ENCODE measurements at regions of chr12 and their contacts with region 1.

Region 1: GRCh38 chr12:38906482-38907170 is 1.2 kb upstream of the CPNE8 start:
- DNase-seq: peak; percentile 88
- H3K4me3 Mint-ChIP-seq: peak overlapping the region; percentile 98
- H3K27ac Mint-ChIP-seq: peak overlapping the region; percentile 89
- H3K4me1 Mint-ChIP-seq: peaks cover 22% of the 10 kb centered on the region
- H3K27me3 Mint-ChIP-seq: no peaks in the 10 kb centered on the region
- CTCF ChIP-seq: peak; percentile 81

Region 2: GRCh38 chr12:38053655-38054464 is 852.8 kb before region 1 on chr12:
- CTCF ChIA-PET with region 1: interaction called, 3 read pairs
- POLR2A ChIA-PET with region 1: no interaction called
- intact Hi-C with region 1: loop called (anchors 2 kb)
- DNase-seq: peak; percentile 68
- H3K4me3 Mint-ChIP-seq: no peak overlapping the region
- H3K27ac Mint-ChIP-seq: no peak overlapping the region
- H3K4me1 Mint-ChIP-seq: peaks cover 8% of the 10 kb centered on the region
- H3K27me3 Mint-ChIP-seq: no peaks in the 10 kb centered on the region
- CTCF ChIP-seq: peak; percentile 47

Region 3: GRCh38 chr12:38384816-38385378 is 521.7 kb before region 1 on chr12:
- CTCF ChIA-PET with region 1: interaction called, 15 read pairs
- POLR2A ChIA-PET with region 1: interaction called, 18 read pairs
- intact Hi-C with region 1: loop called (anchors 5 kb)
- DNase-seq: peak; percentile 98
- H3K4me3 Mint-ChIP-seq: peak overlapping the region; percentile 52
- H3K27ac Mint-ChIP-seq: peak overlapping the region; percentile 47
- H3K4me1 Mint-ChIP-seq: peaks cover 43% of the 10 kb centered on the region
- H3K27me3 Mint-ChIP-seq: no peaks in the 10 kb centered on the region
- CTCF ChIP-seq: peak; percentile 33

Region 4: DNA sequence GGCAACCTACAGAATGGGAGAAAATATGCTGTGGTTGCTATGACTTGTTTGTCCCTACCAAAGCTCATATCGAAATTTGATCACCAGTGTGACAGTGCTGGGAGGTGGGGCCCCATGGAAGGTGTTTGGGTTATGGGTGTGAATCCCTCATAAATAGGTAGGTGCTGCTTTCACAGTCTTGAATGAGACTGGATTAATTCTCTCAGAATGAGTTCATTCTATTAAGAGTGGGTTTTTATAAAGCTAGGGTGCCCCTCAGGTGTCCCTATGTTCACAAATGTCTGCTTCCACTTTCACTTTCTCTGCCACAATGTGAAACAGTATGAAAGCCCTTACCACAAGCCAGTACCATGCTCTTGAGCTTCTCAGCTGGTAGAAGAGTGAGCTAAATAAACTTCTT is 134.8 kb before region 1 on chr12:
- CTCF ChIA-PET with region 1: interaction called, 8 read pairs
- POLR2A ChIA-PET with region 1: interaction called, 3 read pairs
- intact Hi-C with region 1: loop called (anchors 10 kb)
- DNase-seq: peak; percentile 5
- H3K4me3 Mint-ChIP-seq: peak overlapping the region; percentile 16
- H3K27ac Mint-ChIP-seq: no peak overlapping the region
- H3K4me1 Mint-ChIP-seq: peaks cover 6% of the 10 kb centered on the region
- H3K27me3 Mint-ChIP-seq: no peaks in the 10 kb centered on the region
- CTCF ChIP-seq: no peak

Region 5: DNA sequence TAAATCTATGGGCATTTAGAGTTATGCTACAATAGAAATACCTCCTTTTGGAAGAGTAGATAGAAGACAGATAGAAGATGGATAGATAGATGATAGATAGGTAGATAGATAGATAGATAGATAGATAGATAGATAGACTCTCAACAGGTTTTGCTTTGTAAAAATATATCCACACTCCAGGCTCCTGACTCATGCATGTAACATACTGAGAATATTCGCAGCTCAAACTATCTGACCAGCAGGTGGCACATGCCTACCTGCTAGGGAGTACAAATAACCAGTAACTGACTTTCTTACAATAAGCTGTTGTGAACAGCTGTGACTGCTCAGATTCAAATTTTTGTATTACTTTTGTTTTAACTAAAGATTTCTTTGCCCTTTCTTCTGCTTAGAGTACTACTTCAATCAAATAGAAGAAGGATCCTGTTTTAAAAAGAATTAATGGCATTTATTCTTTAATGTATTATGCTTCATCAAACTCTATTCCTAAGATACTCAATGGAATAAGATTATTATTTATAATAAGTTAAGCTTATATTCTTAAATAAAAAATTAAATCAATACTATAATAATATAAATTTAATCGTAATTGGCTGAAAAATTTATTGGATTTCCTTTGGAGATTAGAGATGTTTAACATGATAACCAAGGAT is 14.5 kb after region 1 on chr12:
- CTCF ChIA-PET with region 1: interaction called, 86 read pairs
- POLR2A ChIA-PET with region 1: interaction called, 25 read pairs
- intact Hi-C with region 1: no loop called
- DNase-seq: peak; percentile 84
- H3K4me3 Mint-ChIP-seq: no peak overlapping the region
- H3K27ac Mint-ChIP-seq: no peak overlapping the region
- H3K4me1 Mint-ChIP-seq: peaks cover 7% of the 10 kb centered on the region
- H3K27me3 Mint-ChIP-seq: no peaks in the 10 kb centered on the region
- CTCF ChIP-seq: peak; percentile 71

Region 6: DNA sequence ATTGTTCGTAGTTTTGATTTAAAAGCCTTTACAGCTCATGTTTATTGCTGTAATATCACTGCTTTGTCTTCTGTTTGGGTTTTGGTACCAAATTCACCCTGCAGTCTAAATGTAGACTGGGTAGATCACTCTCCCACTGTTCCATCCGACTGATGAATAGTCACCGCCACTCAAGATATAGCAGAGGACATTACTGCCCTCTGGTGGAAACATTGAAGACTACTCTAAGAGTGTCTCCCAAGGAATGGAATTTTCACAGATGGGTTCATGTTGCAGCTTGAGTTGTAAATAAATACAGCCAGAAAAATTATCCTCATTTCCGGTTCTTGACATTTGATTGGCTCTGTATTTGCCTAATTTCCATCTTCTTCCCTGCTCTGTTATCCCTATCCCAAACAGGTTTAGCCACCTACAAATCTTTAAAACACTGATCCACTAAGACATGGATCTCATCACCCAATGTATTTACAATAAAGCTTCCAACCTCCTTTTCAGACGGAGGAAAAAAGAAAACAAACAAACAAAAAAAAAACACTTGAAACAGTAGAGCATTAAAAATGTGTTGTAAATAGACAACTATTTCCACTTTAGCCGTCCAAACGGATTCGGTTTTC is 197.0 kb after region 1 on chr12:
- CTCF ChIA-PET with region 1: interaction called, 64 read pairs
- POLR2A ChIA-PET with region 1: interaction called, 50 read pairs
- intact Hi-C with region 1: loop called (anchors 1 kb)
- DNase-seq: peak; percentile 87
- H3K4me3 Mint-ChIP-seq: no peak overlapping the region
- H3K27ac Mint-ChIP-seq: no peak overlapping the region
- H3K4me1 Mint-ChIP-seq: peaks cover 26% of the 10 kb centered on the region
- H3K27me3 Mint-ChIP-seq: no peaks in the 10 kb centered on the region
- CTCF ChIP-seq: peak; percentile 75

Measured in MCF 10A (cell line).